H1 (cell line): ENCODE measurements at regions of chr3 and their contacts with region 1.

Region 1: GRCh38 chr3:86245360-86245759 is 745.6 kb downstream of the VGLL3 start:
- DNase-seq: no peak
- H3K4me3 ChIP-seq: no peak overlapping the region
- H3K27ac ChIP-seq: no peak overlapping the region
- H3K4me1 ChIP-seq: peaks cover 0 to 3% (median 0%) of the 10 kb centered on the region in 4 experiments; a peak in 1 of 7 replicates
- H3K27me3 ChIP-seq: no peaks in the 10 kb centered on the region; a peak in 1 of 7 replicates
- CTCF ChIP-seq: peak in 2 of 3 experiments; percentile 47 to 51; a peak in 2 of 4 replicates
- EP300 ChIP-seq: no peak
- POLR2A ChIP-seq: no peak
- RAD21 ChIP-seq: peak; percentile 86 to 90

Region 2: GRCh38 chr3:86221601-86222000 is 23.8 kb before region 1 on chr3:
- CTCF ChIA-PET with region 1: no interaction called
- POLR2A ChIA-PET with region 1: no interaction called
- DNase-seq: no peak
- H3K4me3 ChIP-seq: no peak overlapping the region
- H3K27ac ChIP-seq: no peak overlapping the region
- H3K4me1 ChIP-seq: no peaks in the 10 kb centered on the region
- H3K27me3 ChIP-seq: no peaks in the 10 kb centered on the region
- CTCF ChIP-seq: no peak
- EP300 ChIP-seq: no peak
- POLR2A ChIP-seq: no peak
- RAD21 ChIP-seq: no peak

Region 3: DNA sequence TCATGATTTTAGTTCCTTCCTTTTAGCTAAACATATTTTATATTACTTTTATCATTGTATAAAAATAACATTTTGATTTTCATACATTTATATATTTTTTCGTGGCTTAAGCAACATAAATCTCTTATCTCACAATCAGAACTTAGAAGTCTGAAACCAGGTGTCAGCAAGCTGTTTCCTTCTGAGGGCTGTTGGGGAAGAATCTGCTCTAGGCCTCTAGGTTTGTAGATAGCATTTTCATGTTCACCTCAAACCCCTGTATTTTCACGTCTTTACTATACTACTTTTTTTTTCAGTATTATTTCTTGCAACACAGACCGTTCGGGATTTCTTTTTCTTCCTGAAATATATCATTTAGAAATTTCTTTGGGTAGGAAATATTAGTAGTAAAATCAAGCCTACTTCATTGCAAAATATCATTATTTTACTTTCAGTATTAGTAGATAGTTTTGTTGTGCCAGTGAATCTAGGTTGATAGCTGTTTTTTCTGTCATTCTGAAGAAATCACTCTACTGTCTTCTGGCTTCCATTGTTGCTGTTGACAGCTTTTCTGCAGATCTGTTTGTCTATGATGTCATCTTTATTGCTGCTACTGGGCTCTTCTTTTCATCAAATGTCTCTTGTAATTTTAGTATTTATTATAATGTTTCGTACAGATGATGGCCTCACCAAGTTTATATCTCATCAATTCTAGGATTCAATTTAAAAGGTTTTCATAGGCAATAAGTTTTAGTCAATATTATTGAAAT is 10.7 kb before region 1 on chr3:
- CTCF ChIA-PET with region 1: interaction called, 11 read pairs
- POLR2A ChIA-PET with region 1: no interaction called
- DNase-seq: no peak
- H3K4me3 ChIP-seq: no peak overlapping the region
- H3K27ac ChIP-seq: no peak overlapping the region
- H3K4me1 ChIP-seq: peaks cover 0 to 12% (median 2%) of the 10 kb centered on the region in 4 experiments; a peak in 2 of 7 replicates
- H3K27me3 ChIP-seq: no peaks in the 10 kb centered on the region
- CTCF ChIP-seq: no peak
- EP300 ChIP-seq: no peak
- POLR2A ChIP-seq: no peak
- RAD21 ChIP-seq: no peak